ENCODE measurements at regions of chr11 and their contacts with region 1.

Region 1: DNA sequence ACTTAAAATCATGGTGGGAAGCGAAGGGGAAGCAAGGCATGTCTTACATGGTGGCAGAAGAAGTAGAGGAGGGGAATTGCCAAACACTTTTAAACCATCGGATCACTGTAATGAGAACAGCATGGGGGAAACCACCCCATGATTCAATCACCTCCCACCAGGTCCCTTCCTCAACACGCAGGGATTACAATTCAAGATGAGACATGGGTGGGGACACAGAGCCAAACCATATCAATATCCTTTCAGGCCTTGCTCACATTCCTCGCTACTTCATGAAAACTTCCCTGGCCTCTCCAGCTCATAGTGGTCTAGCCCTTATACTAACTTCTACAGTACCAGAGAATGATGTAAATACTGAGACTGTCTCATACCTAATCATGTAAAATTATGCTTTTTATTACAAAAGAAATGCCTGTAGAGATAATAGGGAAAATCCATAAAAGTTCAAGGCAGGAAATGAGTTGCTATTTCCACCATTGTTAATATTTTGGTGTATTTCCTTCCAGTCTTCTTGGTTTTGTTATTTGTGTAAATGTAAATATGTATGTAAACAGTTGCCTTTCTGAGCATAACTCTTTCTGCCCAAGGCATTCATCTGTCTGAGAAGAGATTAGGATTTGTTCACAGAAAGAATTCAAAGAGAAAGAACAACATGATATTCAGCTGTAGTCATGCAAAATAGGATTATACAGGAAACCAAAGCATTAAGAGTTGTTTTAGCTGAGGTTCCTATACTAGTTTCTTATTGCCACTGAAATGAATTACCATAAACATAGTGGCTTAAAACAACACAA is 104.3 kb upstream of the LDLRAD3 start:
- DNase-seq: no peak
- H3K4me3 ChIP-seq: no peak overlapping the region
- H3K27ac ChIP-seq: no peak overlapping the region
- H3K4me1 ChIP-seq: no peaks in the 10 kb centered on the region
- H3K27me3 ChIP-seq: no peaks in the 10 kb centered on the region
- CTCF ChIP-seq: no peak
- POLR2A ChIP-seq: no peak

Region 2: DNA sequence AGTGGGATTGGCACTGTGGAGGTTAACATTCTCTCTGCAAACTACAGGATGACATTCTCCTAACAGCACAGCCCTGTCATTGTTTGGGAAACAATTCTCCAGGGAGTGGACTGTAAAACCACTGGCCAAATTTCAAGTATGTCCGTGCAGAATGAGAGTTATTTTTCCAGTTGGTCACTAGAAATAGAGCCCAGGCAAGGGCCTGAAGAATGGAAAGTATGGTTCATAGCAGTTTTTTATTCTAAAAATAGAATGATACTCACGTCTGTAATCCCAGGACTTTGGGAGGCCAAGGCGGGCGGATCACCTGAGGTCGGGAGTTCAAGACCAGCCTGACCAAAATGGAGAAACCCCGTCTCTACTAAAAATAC is 739.6 kb before region 1 on chr11:
- intact Hi-C with region 1: no loop called
- DNase-seq: peak in 1 of 2 donors; percentile 25
- H3K4me3 ChIP-seq: no peak overlapping the region
- H3K27ac ChIP-seq: peak overlapping the region; percentile 61 to 82
- H3K4me1 ChIP-seq: no peaks in the 10 kb centered on the region
- H3K27me3 ChIP-seq: no peaks in the 10 kb centered on the region
- CTCF ChIP-seq: no peak
- POLR2A ChIP-seq: no peak

Region 3: GRCh38 chr11:35853971-35854370 is 14.4 kb after region 1 on chr11:
- intact Hi-C with region 1: loop called (anchors 2 kb)
- DNase-seq: no peak
- H3K4me3 ChIP-seq: no peak overlapping the region
- H3K27ac ChIP-seq: no peak overlapping the region
- H3K4me1 ChIP-seq: no peaks in the 10 kb centered on the region
- H3K27me3 ChIP-seq: no peaks in the 10 kb centered on the region
- CTCF ChIP-seq: no peak
- POLR2A ChIP-seq: no peak

Measured in breast epithelium (tissue), 4 donors.